ENCODE measurements at regions of chr7 and their contacts with region 1.

Region 1: DNA sequence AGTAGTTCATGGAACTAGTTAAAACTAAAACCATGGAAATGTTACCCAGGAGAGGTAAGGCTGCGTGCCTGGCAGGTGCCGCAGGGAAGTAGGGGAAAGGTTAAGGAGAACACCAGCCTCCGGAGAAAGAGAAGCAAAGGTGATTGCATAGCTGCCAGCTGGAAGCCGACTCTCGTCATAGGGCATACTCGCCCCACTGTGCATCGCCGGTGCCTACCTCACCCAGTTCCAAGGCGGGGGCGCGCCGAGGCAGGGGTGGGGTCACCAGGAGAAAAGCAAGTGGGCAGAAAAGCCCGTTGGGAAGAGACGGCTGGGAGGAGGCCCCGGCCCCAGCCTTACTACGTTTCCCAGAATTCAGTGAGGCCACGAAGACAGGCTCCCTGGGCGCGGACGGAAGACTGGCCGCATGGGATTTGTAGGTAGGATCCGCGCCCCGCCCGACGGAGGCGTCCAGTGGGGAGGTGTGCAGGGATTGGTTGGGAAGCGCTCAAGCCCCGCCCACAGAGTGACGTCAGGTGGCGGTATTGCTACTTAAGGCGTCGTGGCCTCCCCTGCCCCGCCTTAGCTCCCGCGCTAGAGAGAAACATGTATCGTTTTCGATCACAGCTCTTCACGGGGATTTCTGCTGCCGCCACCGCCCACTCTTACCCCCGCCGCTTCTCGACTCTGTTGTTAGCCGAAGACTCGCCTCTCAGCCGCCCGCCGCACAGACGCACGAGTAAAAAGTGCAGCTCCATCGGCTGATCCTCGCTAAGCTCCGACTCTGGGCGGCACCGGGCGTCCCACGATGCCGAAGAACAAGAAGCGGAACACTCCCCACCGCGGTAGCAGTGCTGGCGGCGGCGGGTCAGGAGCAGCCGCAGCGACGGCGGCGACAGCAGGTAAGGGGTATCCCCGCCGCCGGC is at the start of gene IFRD1:
- DNase-seq: peak; percentile 99
- H3K4me3 ChIP-seq: peak within 1 kb of the TSS; percentile 76 to 98 (median 87)
- H3K27ac ChIP-seq: peak within 1 kb of the TSS; percentile 94
- H3K4me1 ChIP-seq: peaks cover 0 to 8% (median under 1%) of the 10 kb centered on the region in 4 experiments; a peak in 2 of 7 replicates
- H3K27me3 ChIP-seq: no peaks in the 10 kb centered on the region
- CTCF ChIP-seq: no peak
- EP300 ChIP-seq: no peak
- POLR2A ChIP-seq: peak; percentile 99
- RAD21 ChIP-seq: no peak
- total RNA-seq, gene IFRD1: 50.4 and 50.5 TPM in 2 replicates

Region 2: DNA sequence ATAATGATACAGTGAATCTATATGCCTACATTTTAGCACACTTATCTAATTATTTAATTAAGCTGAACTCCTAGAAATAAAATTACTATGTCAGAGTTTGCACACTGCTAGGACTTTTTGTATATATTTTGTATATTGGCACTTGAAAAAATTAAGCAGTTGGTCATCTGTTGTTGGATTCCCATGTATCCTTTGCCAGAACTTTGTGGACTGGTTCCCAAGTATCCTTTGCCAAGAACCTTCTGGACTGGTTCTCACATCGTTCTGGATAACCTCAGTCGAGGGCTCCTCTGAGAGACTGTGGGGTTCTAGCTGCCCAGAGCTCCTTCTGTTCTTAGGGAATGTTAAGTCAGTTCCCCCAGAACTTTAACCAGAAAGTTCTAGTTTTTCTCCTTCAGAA is 108.7 kb before region 1 on chr7:
- CTCF ChIA-PET with region 1: no interaction called
- POLR2A ChIA-PET with region 1: no interaction called
- DNase-seq: no peak
- H3K4me3 ChIP-seq: no peak overlapping the region
- H3K27ac ChIP-seq: no peak overlapping the region
- H3K4me1 ChIP-seq: peaks cover 3 to 13% (median 8%) of the 10 kb centered on the region in 4 experiments; a peak in 3 of 7 replicates
- H3K27me3 ChIP-seq: no peaks in the 10 kb centered on the region
- CTCF ChIP-seq: no peak
- EP300 ChIP-seq: no peak
- POLR2A ChIP-seq: no peak
- RAD21 ChIP-seq: no peak

Region 3: DNA sequence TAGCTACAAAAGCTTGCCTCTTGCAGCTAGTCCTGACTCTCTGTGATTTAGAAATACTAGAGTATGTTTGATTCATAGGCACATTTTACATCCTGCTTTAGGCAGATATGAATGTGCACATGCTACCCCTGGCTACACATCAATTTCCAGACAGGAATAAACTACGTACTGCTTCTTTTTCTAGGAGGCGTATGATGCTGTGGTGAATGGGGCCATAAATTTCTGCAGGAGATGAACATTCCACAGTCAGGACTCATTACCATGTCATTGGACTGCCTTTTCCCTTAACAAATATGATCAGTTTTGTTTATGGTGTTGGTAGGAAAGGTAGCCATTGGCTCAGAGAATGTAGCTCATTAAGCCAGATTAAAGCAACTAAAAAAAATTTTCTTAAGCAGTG is 50.0 kb before region 1 on chr7:
- CTCF ChIA-PET with region 1: no interaction called
- POLR2A ChIA-PET with region 1: interaction called, 12 read pairs
- DNase-seq: no peak
- H3K4me3 ChIP-seq: no peak overlapping the region
- H3K27ac ChIP-seq: no peak overlapping the region
- H3K4me1 ChIP-seq: no peaks in the 10 kb centered on the region
- H3K27me3 ChIP-seq: no peaks in the 10 kb centered on the region
- CTCF ChIP-seq: no peak
- EP300 ChIP-seq: no peak
- POLR2A ChIP-seq: no peak
- RAD21 ChIP-seq: no peak

Region 4: GRCh38 chr7:112422842-112423496 is 27.2 kb before region 1 on chr7:
- CTCF ChIA-PET with region 1: interaction called, 3 read pairs
- POLR2A ChIA-PET with region 1: interaction called, 57 read pairs
- DNase-seq: peak; percentile 60 to 63
- H3K4me3 ChIP-seq: no peak overlapping the region; a peak in 1 of 8 replicates
- H3K27ac ChIP-seq: no peak overlapping the region; the same call in 1 of the 2 replicates
- H3K4me1 ChIP-seq: peaks cover 1 to 26% (median 10%) of the 10 kb centered on the region in 4 experiments; a peak in 6 of 7 replicates
- H3K27me3 ChIP-seq: no peaks in the 10 kb centered on the region
- CTCF ChIP-seq: no peak
- EP300 ChIP-seq: no peak
- POLR2A ChIP-seq: peak in 1 of 2 experiments; percentile 35; a peak in 1 of 3 replicates
- RAD21 ChIP-seq: no peak

Region 5: GRCh38 chr7:112437043-112437442 is 13.1 kb before region 1 on chr7:
- CTCF ChIA-PET with region 1: interaction called, 6 read pairs
- POLR2A ChIA-PET with region 1: interaction called, 49 read pairs
- DNase-seq: no peak
- H3K4me3 ChIP-seq: no peak overlapping the region
- H3K27ac ChIP-seq: no peak overlapping the region
- H3K4me1 ChIP-seq: no peaks in the 10 kb centered on the region
- H3K27me3 ChIP-seq: no peaks in the 10 kb centered on the region
- CTCF ChIP-seq: no peak
- EP300 ChIP-seq: no peak
- POLR2A ChIP-seq: no peak
- RAD21 ChIP-seq: no peak

Region 6: GRCh38 chr7:112470194-112470593 is 20.0 kb after region 1 on chr7:
- CTCF ChIA-PET with region 1: interaction called, 4 read pairs
- POLR2A ChIA-PET with region 1: interaction called, 75 read pairs
- DNase-seq: no peak
- H3K4me3 ChIP-seq: no peak overlapping the region
- H3K27ac ChIP-seq: no peak overlapping the region
- H3K4me1 ChIP-seq: no peaks in the 10 kb centered on the region
- H3K27me3 ChIP-seq: no peaks in the 10 kb centered on the region
- CTCF ChIP-seq: no peak
- EP300 ChIP-seq: no peak
- POLR2A ChIP-seq: no peak
- RAD21 ChIP-seq: no peak

Region 7: DNA sequence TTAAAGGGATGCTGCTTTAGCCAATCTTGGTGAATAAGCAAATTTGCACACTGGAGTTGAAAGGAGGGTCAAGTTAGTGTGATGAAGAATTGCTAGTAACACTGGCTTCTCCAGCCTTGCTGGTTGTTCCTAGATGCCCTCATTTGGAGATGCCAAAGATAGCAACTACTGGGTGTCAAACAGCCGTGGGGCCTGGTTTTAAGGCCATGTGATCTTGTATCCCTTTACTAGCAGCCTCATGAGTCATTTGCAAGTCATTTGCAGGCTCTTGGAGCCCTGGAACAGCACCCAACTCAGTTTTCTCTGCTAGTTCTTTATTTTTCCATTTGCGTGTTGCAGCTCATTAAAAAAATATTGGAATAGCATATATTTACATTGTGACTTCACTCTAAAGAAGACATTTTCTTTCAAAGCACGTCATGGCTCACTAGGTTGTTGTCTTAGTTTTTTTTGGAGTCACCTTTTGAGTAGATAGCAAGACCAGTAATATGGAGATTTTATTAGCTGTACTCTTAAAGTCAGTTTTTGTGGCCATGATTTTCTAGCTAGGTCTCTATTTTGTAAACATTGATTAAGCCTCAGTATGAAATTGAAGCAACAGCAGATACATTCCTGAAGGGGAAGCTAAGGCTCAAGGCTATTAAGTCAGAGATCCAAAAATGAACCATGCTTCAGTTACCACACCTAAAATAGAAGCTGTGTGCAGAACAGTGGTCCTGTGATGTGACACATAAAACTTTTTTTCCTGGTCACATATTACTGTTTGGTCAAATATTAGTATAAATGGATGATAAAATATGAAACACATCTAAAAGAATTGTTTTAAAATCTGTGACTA is 31.9 kb after region 1 on chr7:
- CTCF ChIA-PET with region 1: interaction called, 8 read pairs
- POLR2A ChIA-PET with region 1: interaction called, 29 read pairs
- DNase-seq: peak in 1 of 2 experiments; percentile 13
- H3K4me3 ChIP-seq: no peak overlapping the region
- H3K27ac ChIP-seq: no peak overlapping the region
- H3K4me1 ChIP-seq: no peaks in the 10 kb centered on the region
- H3K27me3 ChIP-seq: no peaks in the 10 kb centered on the region
- CTCF ChIP-seq: no peak
- EP300 ChIP-seq: no peak
- POLR2A ChIP-seq: no peak
- RAD21 ChIP-seq: no peak

Region 8: DNA sequence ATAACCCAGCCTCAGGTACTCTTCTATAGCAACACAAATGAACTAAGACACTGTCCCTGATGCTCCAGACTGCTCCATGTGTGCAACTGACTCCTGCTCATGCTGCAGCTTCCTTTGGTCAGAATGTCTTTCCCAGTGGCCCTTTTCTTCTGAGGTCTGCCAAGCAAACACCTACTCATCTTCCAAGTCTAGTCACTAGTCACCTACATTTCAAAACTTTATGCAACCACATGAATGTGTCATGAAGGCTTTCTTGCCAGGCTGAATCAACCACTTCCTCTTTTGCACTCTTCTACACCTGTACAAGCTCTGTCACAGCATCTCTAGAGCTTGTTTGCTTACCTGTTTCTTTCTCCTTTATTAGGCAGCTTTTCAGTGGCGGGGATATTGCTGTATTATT is 106.5 kb after region 1 on chr7:
- CTCF ChIA-PET with region 1: no interaction called
- POLR2A ChIA-PET with region 1: no interaction called
- DNase-seq: no peak
- H3K4me3 ChIP-seq: no peak overlapping the region
- H3K27ac ChIP-seq: no peak overlapping the region
- H3K4me1 ChIP-seq: no peaks in the 10 kb centered on the region
- H3K27me3 ChIP-seq: no peaks in the 10 kb centered on the region
- CTCF ChIP-seq: no peak
- EP300 ChIP-seq: no peak
- POLR2A ChIP-seq: no peak
- RAD21 ChIP-seq: no peak